SK-N-SH (cell line): ENCODE measurements at regions of chr13 and their contacts with region 1.

Region 1: DNA sequence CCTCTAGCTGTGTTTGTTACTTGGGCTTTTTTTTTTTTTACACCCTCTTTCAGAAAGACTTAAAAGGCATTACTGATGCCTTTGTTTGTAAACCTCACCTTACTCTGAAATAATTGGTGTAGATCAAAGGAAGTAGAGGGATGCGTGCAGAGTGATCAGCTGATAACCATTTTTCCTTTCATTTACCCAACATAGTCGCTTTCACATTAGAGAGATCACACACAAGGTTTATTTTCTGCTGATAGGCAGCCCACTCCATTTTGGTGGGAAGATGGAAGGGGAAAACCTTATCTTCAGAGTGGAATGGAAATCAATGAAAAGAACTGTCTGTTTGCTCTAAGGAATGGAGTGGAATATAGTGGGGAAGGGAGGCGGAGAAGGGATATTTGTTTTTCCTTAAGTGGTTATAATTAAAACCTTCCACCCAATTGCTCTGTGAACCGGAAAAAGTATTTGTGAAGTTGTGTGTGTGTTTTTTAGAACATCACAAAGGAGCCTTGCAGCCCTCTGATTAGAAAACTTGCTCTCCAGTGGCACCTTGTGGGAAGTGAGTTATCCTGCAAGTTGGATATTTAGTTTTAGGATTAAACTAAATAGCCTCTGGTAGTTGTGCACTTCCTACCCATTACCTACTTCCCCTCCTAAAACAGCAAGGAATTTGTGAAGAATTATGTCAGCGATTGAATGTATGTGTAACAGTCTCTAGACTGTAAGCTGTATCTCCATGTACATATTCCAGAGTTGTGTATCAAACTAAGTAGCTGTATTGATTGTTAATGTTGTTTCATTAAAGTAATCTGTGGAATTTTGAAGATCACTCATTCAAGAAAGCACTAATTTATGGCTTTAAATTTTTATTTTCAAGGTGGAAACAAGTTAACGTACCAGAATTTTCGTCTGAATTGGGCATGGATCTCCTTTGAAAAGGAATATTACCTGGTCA is 76.8 kb downstream of the FREM2 start:
- DNase-seq: peak; percentile 36
- H3K4me3 ChIP-seq: no peak overlapping the region; a peak in 1 of 4 replicates
- H3K27ac ChIP-seq: no peak overlapping the region
- H3K4me1 ChIP-seq: no peaks in the 10 kb centered on the region; a peak in 2 of 4 replicates
- H3K27me3 ChIP-seq: no peaks in the 10 kb centered on the region; the same call in 1 of the 2 replicates
- CTCF ChIP-seq: peak; percentile 69
- EP300 ChIP-seq: no peak
- RAD21 ChIP-seq: peak; percentile 76

Region 2: DNA sequence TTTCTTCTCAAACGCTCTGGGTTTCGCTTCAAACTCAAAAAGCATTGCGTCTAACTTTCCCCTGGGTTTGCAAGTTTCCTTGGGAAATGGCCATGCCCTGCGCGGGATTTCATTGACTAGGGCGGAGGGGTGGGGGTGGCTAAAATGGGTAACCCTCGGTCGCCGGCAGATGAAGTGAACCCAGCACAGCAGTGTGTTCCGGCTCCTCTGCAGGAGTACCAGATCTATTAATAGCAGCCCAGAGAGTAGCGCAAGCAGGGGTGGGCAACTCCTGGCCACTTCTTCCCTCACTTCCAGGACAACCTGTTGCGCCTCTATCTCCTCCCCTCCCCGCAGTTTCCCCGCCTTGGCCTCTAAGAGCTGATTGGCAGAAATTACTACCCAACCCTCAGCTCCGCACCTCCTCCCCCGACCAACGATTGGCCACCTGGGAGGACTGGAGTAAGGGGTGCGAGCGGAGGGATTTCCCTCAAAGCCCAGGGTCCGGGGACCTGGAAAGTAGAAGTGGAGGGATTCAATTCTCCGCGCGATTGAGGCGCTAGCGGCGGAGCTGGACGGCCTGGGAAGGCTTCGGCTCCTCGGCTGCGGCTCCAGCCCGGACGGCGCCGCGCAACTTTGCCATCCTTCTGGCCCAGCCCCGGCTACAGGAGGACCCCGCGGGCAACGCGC is 77.0 kb before region 1 on chr13 and contains the start of gene FREM2:
- CTCF ChIA-PET with region 1: interaction called, 17 read pairs
- POLR2A ChIA-PET with region 1: no interaction called
- DNase-seq: no peak
- H3K4me3 ChIP-seq: peak within 1 kb of the TSS; percentile 7 to 19; a peak in 1 of 4 replicates
- H3K27ac ChIP-seq: no peak within 1 kb of the TSS
- H3K4me1 ChIP-seq: no peaks in the 10 kb centered on the region
- H3K27me3 ChIP-seq: peaks cover 27% of the 10 kb centered on the region; the same call in 1 of the 2 replicates
- CTCF ChIP-seq: no peak
- EP300 ChIP-seq: no peak
- RAD21 ChIP-seq: no peak
- polyA plus RNA-seq, gene FREM2: not detected in 2 replicates

Region 3: GRCh38 chr13:38743466-38743865 is 20.2 kb before region 1 on chr13:
- CTCF ChIA-PET with region 1: interaction called, 14 read pairs
- POLR2A ChIA-PET with region 1: no interaction called
- DNase-seq: no peak
- H3K4me3 ChIP-seq: no peak overlapping the region
- H3K27ac ChIP-seq: no peak overlapping the region
- H3K4me1 ChIP-seq: no peaks in the 10 kb centered on the region
- H3K27me3 ChIP-seq: no peaks in the 10 kb centered on the region
- CTCF ChIP-seq: no peak
- EP300 ChIP-seq: no peak
- RAD21 ChIP-seq: no peak

Region 4: DNA sequence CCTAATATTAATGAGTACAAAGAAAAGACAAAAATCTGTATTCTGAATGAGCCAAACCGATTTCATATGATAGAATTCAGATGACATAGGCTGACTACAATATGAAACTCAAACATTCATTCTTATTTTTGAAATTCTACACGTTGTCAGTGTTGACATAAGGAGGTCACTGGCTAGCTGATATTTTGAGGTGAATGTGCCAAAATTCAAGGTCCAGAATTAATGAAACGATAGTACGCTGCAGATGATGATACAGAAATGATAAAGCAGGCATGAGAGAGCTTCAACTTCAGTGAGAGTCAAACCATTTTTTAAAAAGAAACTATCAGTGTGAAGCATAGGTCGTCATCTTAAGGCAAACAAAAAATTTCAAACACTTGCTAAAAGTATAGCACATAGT is 11.4 kb after region 1 on chr13:
- CTCF ChIA-PET with region 1: interaction called, 18 read pairs
- POLR2A ChIA-PET with region 1: no interaction called
- DNase-seq: no peak
- H3K4me3 ChIP-seq: no peak overlapping the region
- H3K27ac ChIP-seq: no peak overlapping the region
- H3K4me1 ChIP-seq: no peaks in the 10 kb centered on the region
- H3K27me3 ChIP-seq: no peaks in the 10 kb centered on the region
- CTCF ChIP-seq: no peak
- EP300 ChIP-seq: no peak
- RAD21 ChIP-seq: no peak